K562 (cell line): ENCODE measurements at regions of chr1 and their contacts with region 1.

Region 1: DNA sequence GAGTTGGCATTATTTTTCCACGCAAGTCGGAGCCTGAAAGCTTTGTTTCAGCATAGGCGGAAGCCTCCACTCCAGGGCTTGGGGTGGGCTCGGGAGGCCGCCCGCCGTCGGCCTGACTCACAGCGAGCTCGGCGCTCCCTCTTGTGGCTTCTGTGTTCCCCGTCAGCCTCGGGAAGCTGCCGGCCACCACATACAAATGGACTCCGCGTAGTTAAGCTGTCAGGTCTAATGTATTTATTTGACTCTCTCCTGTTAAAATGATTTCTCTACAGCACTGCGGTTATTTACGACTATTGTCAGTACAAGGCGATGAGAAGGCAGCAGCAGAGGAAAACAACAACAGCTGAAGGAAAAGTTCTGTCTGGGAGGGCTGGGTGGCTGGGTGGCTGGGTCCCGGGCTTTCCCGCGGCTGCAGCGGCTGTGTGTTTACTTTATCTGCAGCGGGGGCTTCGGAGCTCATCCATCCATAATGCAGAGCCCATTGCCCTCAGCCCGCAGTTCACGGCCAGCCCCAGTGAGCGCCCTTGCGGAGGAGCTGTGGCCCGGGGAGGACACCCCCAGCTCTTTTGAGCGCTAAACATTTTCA is 375.7 kb upstream of the CAMK1G start:
- DNase-seq: peak; percentile 38 to 60 (median 44)
- ATAC-seq: peak; percentile 98
- H3K4me3 ChIP-seq: no peak overlapping the region
- H3K27ac ChIP-seq: no peak overlapping the region
- H3K4me1 ChIP-seq: peaks cover 0 to 6% of the 10 kb centered on the region in 2 experiments; a peak in 1 of 5 replicates
- H3K27me3 ChIP-seq: peaks cover 0 to 19% of the 10 kb centered on the region in 2 experiments; a peak in 3 of 5 replicates
- CTCF ChIP-seq: peak; percentile 66 to 72 (median 68)
- EP300 ChIP-seq: no peak
- POLR2A ChIP-seq: no peak
- RAD21 ChIP-seq: peak; percentile 21 to 63; a peak in 2 of 4 replicates

Region 2: GRCh38 chr1:208029381-208030287 is 1178.2 kb before region 1 on chr1:
- CTCF ChIA-PET with region 1: no interaction called
- POLR2A ChIA-PET with region 1: no interaction called
- in situ Hi-C with region 1: loop called (anchors 25 kb)
- intact Hi-C with region 1: loop called (anchors 10 kb)
- DNase-seq: no peak
- ATAC-seq: no peak
- H3K4me3 ChIP-seq: no peak overlapping the region
- H3K27ac ChIP-seq: no peak overlapping the region
- H3K4me1 ChIP-seq: no peaks in the 10 kb centered on the region
- H3K27me3 ChIP-seq: peaks cover 61 to 87% of the 10 kb centered on the region in 2 experiments
- CTCF ChIP-seq: no peak
- EP300 ChIP-seq: no peak
- POLR2A ChIP-seq: no peak
- RAD21 ChIP-seq: no peak

Region 3: DNA sequence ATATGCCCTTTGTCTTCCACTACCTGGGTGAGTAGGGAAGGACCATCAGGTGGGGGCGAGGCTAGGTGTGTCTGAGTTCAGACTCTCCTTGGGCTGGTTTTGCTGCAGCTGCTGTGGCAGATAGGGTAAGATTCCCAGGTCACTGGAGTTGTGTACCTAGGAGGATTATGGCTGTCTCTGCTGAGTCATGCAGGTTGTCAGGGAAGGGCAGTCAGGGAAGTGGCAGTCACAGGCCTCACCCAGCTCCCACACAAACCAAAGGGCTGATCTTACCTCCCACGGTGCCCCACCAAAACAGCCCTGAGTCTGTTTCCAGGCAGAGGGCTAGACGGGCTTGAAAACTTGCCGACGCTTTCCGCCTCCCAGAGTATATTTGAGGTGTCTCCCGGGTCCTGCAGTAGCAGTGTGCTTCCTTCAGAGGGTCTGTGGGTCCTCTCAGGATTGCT is 762.0 kb before region 1 on chr1:
- CTCF ChIA-PET with region 1: no interaction called
- POLR2A ChIA-PET with region 1: no interaction called
- in situ Hi-C with region 1: no loop called
- intact Hi-C with region 1: no loop called
- DNase-seq: peak in 1 of 4 experiments; percentile 30
- ATAC-seq: peak; percentile 76
- H3K4me3 ChIP-seq: no peak overlapping the region
- H3K27ac ChIP-seq: no peak overlapping the region; the same call in 2 of the 3 replicates
- H3K4me1 ChIP-seq: peaks cover 7% of the 10 kb centered on the region in 2 experiments; a peak in 3 of 5 replicates
- H3K27me3 ChIP-seq: peaks cover 0 to 4% of the 10 kb centered on the region in 2 experiments; a peak in 1 of 5 replicates
- CTCF ChIP-seq: no peak
- EP300 ChIP-seq: no peak
- POLR2A ChIP-seq: no peak
- RAD21 ChIP-seq: no peak

Region 4: GRCh38 chr1:209248649-209249279 is 41.0 kb after region 1 on chr1:
- CTCF ChIA-PET with region 1: no interaction called
- POLR2A ChIA-PET with region 1: no interaction called
- in situ Hi-C with region 1: no loop called
- intact Hi-C with region 1: loop called (anchors 5 kb)
- DNase-seq: peak; percentile 68 to 73 (median 70)
- ATAC-seq: peak; percentile 93
- H3K4me3 ChIP-seq: no peak overlapping the region
- H3K27ac ChIP-seq: no peak overlapping the region
- H3K4me1 ChIP-seq: no peaks in the 10 kb centered on the region
- H3K27me3 ChIP-seq: no peaks in the 10 kb centered on the region
- CTCF ChIP-seq: peak; percentile 68 to 90 (median 85)
- EP300 ChIP-seq: no peak
- POLR2A ChIP-seq: no peak
- RAD21 ChIP-seq: peak; percentile 67 to 83

Region 5: DNA sequence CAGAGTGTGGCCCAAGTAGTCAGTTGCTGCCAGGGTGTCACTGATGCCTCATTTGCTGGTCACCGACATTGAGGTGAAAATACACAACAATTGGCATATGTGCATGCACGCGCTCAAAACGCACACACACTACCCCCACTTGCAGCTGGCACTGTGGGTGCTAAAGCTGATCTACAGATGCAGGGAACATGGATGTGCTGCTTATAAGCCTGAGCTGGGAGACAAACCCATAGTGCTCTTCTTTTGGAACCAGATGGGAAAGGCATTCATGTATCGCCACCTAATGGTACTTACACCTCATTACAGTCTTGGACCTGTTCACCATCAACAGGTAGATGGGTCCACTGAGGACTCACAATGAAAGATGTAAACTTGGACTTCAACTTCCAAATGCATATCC is 305.4 kb after region 1 on chr1:
- CTCF ChIA-PET with region 1: no interaction called
- POLR2A ChIA-PET with region 1: no interaction called
- in situ Hi-C with region 1: no loop called
- intact Hi-C with region 1: loop called (anchors 2 kb)
- DNase-seq: peak; percentile 32 to 60 (median 42)
- ATAC-seq: peak; percentile 94
- H3K4me3 ChIP-seq: no peak overlapping the region
- H3K27ac ChIP-seq: no peak overlapping the region
- H3K4me1 ChIP-seq: no peaks in the 10 kb centered on the region
- H3K27me3 ChIP-seq: peaks cover 2 to 5% of the 10 kb centered on the region in 2 experiments; a peak in 1 of 5 replicates
- CTCF ChIP-seq: peak; percentile 65 to 79 (median 78)
- EP300 ChIP-seq: no peak
- POLR2A ChIP-seq: no peak
- RAD21 ChIP-seq: peak in 1 of 2 experiments; percentile 67; a peak in 2 of 4 replicates